Cardiac septum (tissue), 1 donor: ENCODE measurements at regions of chr3 and their contacts with region 1.

Region 1: GRCh38 chr3:131794766-131795388 is 239.9 kb downstream of the CPNE4 start:
- DNase-seq: no peak

Region 2: GRCh38 chr3:131047582-131047981 is 747.3 kb before region 1 on chr3:
- intact Hi-C with region 1: loop called (anchors 10 kb)
- DNase-seq: no peak

Region 3: GRCh38 chr3:131543714-131544113 is 251.2 kb before region 1 on chr3:
- intact Hi-C with region 1: loop called (anchors 10 kb)
- DNase-seq: peak; percentile 83

Region 4: GRCh38 chr3:132029182-132029902 is 234.5 kb after region 1 on chr3:
- intact Hi-C with region 1: loop called (anchors 2 kb)
- DNase-seq: peak; percentile 84

Region 5: DNA sequence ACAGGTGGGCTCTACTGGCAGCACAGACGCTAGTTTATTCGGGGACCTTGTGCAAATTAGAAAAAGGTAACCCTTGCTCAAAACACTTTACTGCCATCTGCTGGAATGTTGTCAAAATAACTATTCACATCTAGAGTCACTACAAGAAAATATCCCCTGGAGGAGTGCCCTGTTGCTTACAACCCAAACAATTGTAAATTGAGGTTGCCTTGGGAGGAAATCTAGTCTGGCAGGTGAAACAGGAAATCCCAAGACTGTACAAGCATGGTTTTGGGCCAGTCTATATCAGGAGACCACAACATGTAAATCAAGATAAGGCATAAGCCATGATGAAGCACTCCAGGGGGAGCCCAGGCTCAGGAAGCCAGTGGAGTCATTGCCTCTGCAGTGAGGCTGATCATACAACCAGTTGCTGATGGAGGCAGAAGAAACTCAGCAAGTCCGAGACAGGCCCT is 385.5 kb after region 1 on chr3:
- intact Hi-C with region 1: loop called (anchors 10 kb)
- DNase-seq: no peak